Heart left ventricle (tissue), 16 donors: ENCODE measurements at regions of chr1 and their contacts with region 1.

Region 1: GRCh38 chr1:63691701-63692425 is 82.0 kb upstream of the ROR1 start:
- DNase-seq: peak in 2 of 5 donors; percentile 53 to 56
- ATAC-seq: peak; percentile 74 to 87 (median 84)
- H3K4me3 ChIP-seq: no peak overlapping the region
- H3K27ac ChIP-seq: peak overlapping the region in 8 of 12 donors; percentile 27 to 79 (median 50)
- H3K4me1 ChIP-seq: peaks cover 0 to 20% (median 6%) of the 10 kb centered on the region in 12 donors
- H3K27me3 ChIP-seq: no peaks in the 10 kb centered on the region
- CTCF ChIP-seq: peak; percentile 45 to 82 (median 71)
- POLR2A ChIP-seq: no peak

Region 2: GRCh38 chr1:63773815-63774616 is 82.2 kb after region 1 on chr1 and contains the start of gene ROR1:
- intact Hi-C with region 1: loop called in 4 of 10 experiments (anchors 2 to 5 kb)
- DNase-seq: peak; percentile 89 to 93 (median 91)
- ATAC-seq: peak; percentile 92 to 97 (median 96)
- H3K4me3 ChIP-seq: peak within 1 kb of the TSS; percentile 60 to 94 (median 73)
- H3K27ac ChIP-seq: peak within 1 kb of the TSS; percentile 75 to 99 (median 94)
- H3K4me1 ChIP-seq: peaks cover 0 to 37% (median 11%) of the 10 kb centered on the region in 12 donors
- H3K27me3 ChIP-seq: peaks cover 0 to 46% (median 0%) of the 10 kb centered on the region in 9 donors
- CTCF ChIP-seq: peak; percentile 29 to 80 (median 64)
- POLR2A ChIP-seq: peak in 1 of 2 donors; percentile 75
- total RNA-seq, gene ROR1: 13.4 to 35.3 (median 19.6) TPM

Region 3: GRCh38 chr1:63859480-63860270 is 167.8 kb after region 1 on chr1:
- intact Hi-C with region 1: loop called in 2 of 10 experiments (anchors 5 to 10 kb)
- DNase-seq: peak in 1 of 5 donors; percentile 37
- ATAC-seq: peak; percentile 11 to 54 (median 28)
- H3K4me3 ChIP-seq: no peak overlapping the region
- H3K27ac ChIP-seq: peak overlapping the region in 4 of 12 donors; percentile 4 to 70 (median 39)
- H3K4me1 ChIP-seq: peaks cover 0 to 52% (median 14%) of the 10 kb centered on the region in 12 donors
- H3K27me3 ChIP-seq: no peaks in the 10 kb centered on the region
- CTCF ChIP-seq: no peak
- POLR2A ChIP-seq: no peak

Region 4: GRCh38 chr1:63902844-63903589 is 211.2 kb after region 1 on chr1:
- intact Hi-C with region 1: loop called in 1 of 10 experiments (anchors 10 kb)
- DNase-seq: no peak
- ATAC-seq: peak in 2 of 4 donors; percentile 24 to 43
- H3K4me3 ChIP-seq: no peak overlapping the region
- H3K27ac ChIP-seq: no peak overlapping the region
- H3K4me1 ChIP-seq: peaks cover 0 to 35% (median 13%) of the 10 kb centered on the region in 12 donors
- H3K27me3 ChIP-seq: no peaks in the 10 kb centered on the region
- CTCF ChIP-seq: no peak
- POLR2A ChIP-seq: no peak

Region 5: GRCh38 chr1:63935143-63935542 is 243.3 kb after region 1 on chr1:
- intact Hi-C with region 1: loop called in 1 of 10 experiments (anchors 10 kb)
- DNase-seq: peak in 2 of 5 donors; percentile 36 to 43
- ATAC-seq: peak; percentile 60 to 88 (median 66)
- H3K4me3 ChIP-seq: no peak overlapping the region
- H3K27ac ChIP-seq: peak overlapping the region in 7 of 12 donors; percentile 11 to 63 (median 46)
- H3K4me1 ChIP-seq: peaks cover 0 to 36% (median 9%) of the 10 kb centered on the region in 12 donors
- H3K27me3 ChIP-seq: no peaks in the 10 kb centered on the region
- CTCF ChIP-seq: peak in 10 of 12 donors; percentile 11 to 54 (median 28)
- POLR2A ChIP-seq: no peak

Region 6: GRCh38 chr1:64136752-64137411 is 445.0 kb after region 1 on chr1:
- intact Hi-C with region 1: loop called in 9 of 10 experiments (anchors 2 to 10 kb)
- DNase-seq: peak in 4 of 5 donors; percentile 64 to 77 (median 66)
- ATAC-seq: peak; percentile 53 to 87 (median 83)
- H3K4me3 ChIP-seq: no peak overlapping the region
- H3K27ac ChIP-seq: peak overlapping the region in 6 of 12 donors; percentile 4 to 55 (median 28)
- H3K4me1 ChIP-seq: peaks cover 0 to 24% (median 4%) of the 10 kb centered on the region in 12 donors
- H3K27me3 ChIP-seq: no peaks in the 10 kb centered on the region
- CTCF ChIP-seq: peak; percentile 77 to 94 (median 87)
- POLR2A ChIP-seq: no peak